Naive thymus-derived CD4-positive, alpha-beta T cell (primary cell): ENCODE measurements at regions of chr3 and their contacts with region 1.

Region 1: GRCh38 chr3:49469936-49470713 is at the start of gene DAG1:
- DNase-seq: peak; percentile 90 to 98 (median 95)
- ATAC-seq: peak; percentile 91
- H3K4me3 ChIP-seq: peak within 1 kb of the TSS; percentile 92
- H3K4me3 Mint-ChIP-seq: peak within 1 kb of the TSS; percentile 87 to 97 (median 92)
- H3K27ac ChIP-seq: peak within 1 kb of the TSS; percentile 94
- H3K27ac Mint-ChIP-seq: peak within 1 kb of the TSS; percentile 89 to 95 (median 93)
- H3K4me1 ChIP-seq: peaks cover 15 to 20% of the 10 kb centered on the region in 2 donors
- H3K4me1 Mint-ChIP-seq: peaks cover 14 to 27% (median 22%) of the 10 kb centered on the region in 7 donors
- H3K27me3 ChIP-seq: no peaks in the 10 kb centered on the region
- H3K27me3 Mint-ChIP-seq: no peaks in the 10 kb centered on the region
- total RNA-seq, gene DAG1: 12.0 to 22.3 (median 20.1) TPM

Region 2: GRCh38 chr3:48088749-48089466 is 1381.2 kb before region 1 on chr3:
- CTCF ChIA-PET with region 1: no interaction called
- POLR2A ChIA-PET with region 1: no interaction called
- intact Hi-C with region 1: loop called in 1 of 2 experiments (anchors 5 kb)
- DNase-seq: peak; percentile 89 to 96 (median 94)
- ATAC-seq: peak; percentile 97
- H3K4me3 ChIP-seq: peak overlapping the region; percentile 85
- H3K4me3 Mint-ChIP-seq: peak overlapping the region; percentile 90 to 99 (median 96)
- H3K27ac ChIP-seq: peak overlapping the region; percentile 95
- H3K27ac Mint-ChIP-seq: peak overlapping the region; percentile 71 to 99 (median 98)
- H3K4me1 ChIP-seq: peaks cover 7 to 11% of the 10 kb centered on the region in 2 donors
- H3K4me1 Mint-ChIP-seq: peaks cover 14 to 33% (median 29%) of the 10 kb centered on the region in 7 donors
- H3K27me3 ChIP-seq: no peaks in the 10 kb centered on the region
- H3K27me3 Mint-ChIP-seq: peaks cover 0 to 18% (median 0%) of the 10 kb centered on the region in 5 donors

Region 3: DNA sequence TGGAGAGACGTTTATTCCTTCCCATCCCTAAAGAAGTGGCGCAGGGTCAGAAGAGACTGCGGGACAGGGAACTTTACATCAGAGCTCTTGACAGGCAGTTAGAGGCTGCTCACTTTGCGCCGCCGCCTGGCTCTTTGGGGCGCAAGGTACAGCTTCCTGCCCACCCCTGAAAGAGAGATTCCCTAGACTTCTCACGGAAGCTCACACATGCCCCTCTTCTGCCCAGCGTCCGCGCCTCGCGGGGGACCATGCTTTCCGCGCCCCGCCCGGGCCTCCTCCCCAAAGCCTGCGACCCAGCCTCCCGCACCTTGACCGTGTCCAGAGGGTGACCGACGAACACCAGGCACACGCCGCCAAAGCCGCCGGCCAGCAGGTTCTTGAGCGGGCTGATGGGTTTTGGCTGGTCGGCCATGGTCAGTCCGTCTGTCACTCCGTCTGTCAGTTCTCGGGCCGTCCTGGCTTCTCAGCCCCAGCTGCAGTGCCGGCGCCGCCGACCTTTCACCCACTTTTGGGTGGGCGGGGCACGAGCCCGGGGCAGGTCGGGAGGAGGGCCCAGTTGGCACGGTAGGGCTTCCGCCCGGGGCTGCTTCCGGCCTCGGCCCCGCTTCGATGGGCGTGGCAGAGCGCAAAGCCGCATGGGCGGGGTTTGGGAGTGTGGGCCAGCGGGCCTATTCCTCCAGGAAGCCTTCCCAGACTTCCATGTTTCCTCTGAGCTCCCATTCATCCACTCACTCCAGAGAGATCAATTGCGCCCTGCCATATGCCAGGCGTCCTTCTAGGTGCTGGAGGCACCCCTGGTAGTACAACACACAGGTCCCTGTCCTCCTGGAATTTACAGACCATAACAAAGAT is 571.5 kb before region 1 on chr3 and contains the start of gene SLC25A20:
- CTCF ChIA-PET with region 1: no interaction called
- POLR2A ChIA-PET with region 1: no interaction called
- intact Hi-C with region 1: loop called in 1 of 2 experiments (anchors 10 kb)
- DNase-seq: peak; percentile 78 to 95 (median 85)
- ATAC-seq: peak; percentile 98
- H3K4me3 ChIP-seq: peak within 1 kb of the TSS; percentile 91
- H3K4me3 Mint-ChIP-seq: peak within 1 kb of the TSS; percentile 89 to 99 (median 94)
- H3K27ac ChIP-seq: peak within 1 kb of the TSS; percentile 76
- H3K27ac Mint-ChIP-seq: peak within 1 kb of the TSS; percentile 83 to 99 (median 93)
- H3K4me1 ChIP-seq: peaks cover 21 to 23% of the 10 kb centered on the region in 2 donors
- H3K4me1 Mint-ChIP-seq: peaks cover 27 to 51% (median 41%) of the 10 kb centered on the region in 7 donors
- H3K27me3 ChIP-seq: no peaks in the 10 kb centered on the region
- H3K27me3 Mint-ChIP-seq: no peaks in the 10 kb centered on the region
- total RNA-seq, gene SLC25A20: 6.6 to 27.3 (median 12.8) TPM

Region 4: DNA sequence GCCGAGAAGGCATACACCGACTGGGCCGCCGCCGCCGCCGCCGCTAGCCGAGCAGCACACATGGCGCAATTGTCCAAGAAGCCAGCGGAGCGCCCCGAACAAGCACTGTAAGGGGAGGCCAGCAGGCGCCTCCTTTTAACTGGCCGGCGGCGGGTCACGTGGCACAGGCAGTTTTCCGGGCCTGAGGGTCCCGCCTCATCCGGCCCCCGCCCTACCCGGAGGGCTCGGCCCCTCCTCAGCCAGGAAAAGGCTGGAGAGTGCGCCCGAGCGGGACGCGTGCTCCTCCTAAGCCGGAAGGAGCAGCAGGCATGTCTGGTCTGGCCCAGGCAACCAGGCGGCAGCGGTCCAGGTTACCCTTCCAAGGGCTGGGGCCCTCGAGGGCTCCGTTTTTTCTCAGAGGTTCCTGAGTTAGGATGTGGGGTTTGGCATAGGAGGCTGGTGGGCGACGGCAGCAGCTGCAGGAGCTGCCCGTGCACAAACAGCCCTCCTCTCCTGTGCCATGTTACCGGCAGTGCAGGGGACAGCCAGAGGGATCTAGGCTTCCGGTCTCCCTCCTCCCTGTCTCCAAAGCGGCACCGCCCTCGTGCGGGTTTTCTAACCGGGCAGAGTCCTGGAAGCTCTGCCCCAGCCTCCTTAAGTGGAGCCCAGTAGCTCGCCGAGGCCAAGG is 111.8 kb before region 1 on chr3 and contains the start of gene GPX1:
- CTCF ChIA-PET with region 1: no interaction called
- POLR2A ChIA-PET with region 1: no interaction called
- intact Hi-C with region 1: loop called in 1 of 2 experiments (anchors 1 kb)
- DNase-seq: peak; percentile 45 to 89 (median 57)
- ATAC-seq: peak; percentile 87
- H3K4me3 ChIP-seq: peak within 1 kb of the TSS; percentile 85
- H3K4me3 Mint-ChIP-seq: peak within 1 kb of the TSS; percentile 88 to 99 (median 92)
- H3K27ac ChIP-seq: peak within 1 kb of the TSS; percentile 81
- H3K27ac Mint-ChIP-seq: peak within 1 kb of the TSS; percentile 92 to 98 (median 95)
- H3K4me1 ChIP-seq: peaks cover 17% of the 10 kb centered on the region in 2 donors
- H3K4me1 Mint-ChIP-seq: peaks cover 14 to 43% (median 25%) of the 10 kb centered on the region in 7 donors
- H3K27me3 ChIP-seq: no peaks in the 10 kb centered on the region
- H3K27me3 Mint-ChIP-seq: no peaks in the 10 kb centered on the region
- total RNA-seq, gene GPX1: 56.9 to 201 (median 86.9) TPM

Region 5: DNA sequence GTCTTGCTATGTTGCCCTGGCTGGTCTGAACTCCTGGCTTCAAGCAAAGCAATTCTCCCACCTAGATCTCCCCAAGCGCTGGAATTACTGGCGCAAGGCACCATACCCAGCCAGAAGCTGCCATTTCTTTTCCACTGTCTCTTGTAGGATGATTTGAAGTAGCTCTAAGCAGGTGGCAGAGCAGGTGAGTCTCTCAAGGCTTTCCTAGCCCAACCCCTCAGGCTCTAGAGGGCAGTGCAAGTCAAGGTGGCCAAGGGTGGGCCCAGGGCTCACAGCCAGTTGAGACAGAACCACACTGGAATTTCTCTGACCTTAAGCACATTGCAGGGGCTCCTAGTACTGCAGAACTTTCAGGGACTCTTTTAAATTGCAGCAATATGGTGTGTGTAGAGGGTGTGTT is 15.7 kb before region 1 on chr3:
- CTCF ChIA-PET with region 1: interaction called, 3 read pairs
- POLR2A ChIA-PET with region 1: interaction called, 3 read pairs
- intact Hi-C with region 1: loop called in 1 of 2 experiments (anchors 1 kb)
- DNase-seq: no peak
- ATAC-seq: no peak
- H3K4me3 ChIP-seq: no peak overlapping the region
- H3K4me3 Mint-ChIP-seq: no peak overlapping the region
- H3K27ac ChIP-seq: no peak overlapping the region
- H3K27ac Mint-ChIP-seq: peak overlapping the region in 1 of 9 donors; percentile 63
- H3K4me1 ChIP-seq: no peaks in the 10 kb centered on the region
- H3K4me1 Mint-ChIP-seq: no peaks in the 10 kb centered on the region
- H3K27me3 ChIP-seq: no peaks in the 10 kb centered on the region
- H3K27me3 Mint-ChIP-seq: no peaks in the 10 kb centered on the region

Region 6: GRCh38 chr3:49512771-49513358 is 42.7 kb after region 1 on chr3:
- CTCF ChIA-PET with region 1: no interaction called
- POLR2A ChIA-PET with region 1: no interaction called
- intact Hi-C with region 1: no loop called
- DNase-seq: no peak
- ATAC-seq: no peak
- H3K4me3 ChIP-seq: no peak overlapping the region
- H3K4me3 Mint-ChIP-seq: no peak overlapping the region
- H3K27ac ChIP-seq: no peak overlapping the region
- H3K27ac Mint-ChIP-seq: peak overlapping the region in 1 of 9 donors; percentile 42
- H3K4me1 ChIP-seq: no peaks in the 10 kb centered on the region
- H3K4me1 Mint-ChIP-seq: peaks cover 0 to 19% (median 10%) of the 10 kb centered on the region in 7 donors
- H3K27me3 ChIP-seq: no peaks in the 10 kb centered on the region
- H3K27me3 Mint-ChIP-seq: no peaks in the 10 kb centered on the region

Region 7: GRCh38 chr3:49638445-49638844 is 168.3 kb after region 1 on chr3:
- CTCF ChIA-PET with region 1: no interaction called
- POLR2A ChIA-PET with region 1: no interaction called
- intact Hi-C with region 1: no loop called
- DNase-seq: no peak
- ATAC-seq: no peak
- H3K4me3 ChIP-seq: no peak overlapping the region
- H3K4me3 Mint-ChIP-seq: no peak overlapping the region
- H3K27ac ChIP-seq: no peak overlapping the region
- H3K27ac Mint-ChIP-seq: no peak overlapping the region
- H3K4me1 ChIP-seq: no peaks in the 10 kb centered on the region
- H3K4me1 Mint-ChIP-seq: peaks cover 0 to 7% (median 0%) of the 10 kb centered on the region in 7 donors
- H3K27me3 ChIP-seq: no peaks in the 10 kb centered on the region
- H3K27me3 Mint-ChIP-seq: peaks cover 0 to 3% (median 0%) of the 10 kb centered on the region in 5 donors

Region 8: DNA sequence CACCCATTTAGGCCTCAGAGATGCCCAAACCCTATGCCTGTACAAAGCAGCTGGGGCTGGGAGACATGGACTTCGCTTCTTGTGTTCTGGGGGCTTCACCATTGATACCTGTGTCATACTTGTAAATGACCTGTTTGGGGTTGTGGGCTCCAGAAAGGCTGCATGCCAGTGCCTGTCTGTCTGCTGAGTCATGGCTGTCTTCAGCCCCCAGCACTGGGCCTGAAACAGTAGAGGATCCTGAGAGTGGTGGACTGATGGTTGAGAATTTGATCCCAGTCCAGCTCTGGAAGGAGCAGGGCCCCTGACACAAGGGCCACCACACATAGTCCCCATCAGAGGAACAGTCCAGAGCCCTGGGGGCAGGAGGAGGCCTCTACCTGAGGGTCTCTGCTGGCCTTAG is 179.5 kb after region 1 on chr3:
- CTCF ChIA-PET with region 1: no interaction called
- POLR2A ChIA-PET with region 1: no interaction called
- intact Hi-C with region 1: no loop called
- DNase-seq: no peak
- ATAC-seq: no peak
- H3K4me3 ChIP-seq: no peak overlapping the region
- H3K4me3 Mint-ChIP-seq: no peak overlapping the region
- H3K27ac ChIP-seq: no peak overlapping the region
- H3K27ac Mint-ChIP-seq: no peak overlapping the region
- H3K4me1 ChIP-seq: no peaks in the 10 kb centered on the region
- H3K4me1 Mint-ChIP-seq: peaks cover 0 to 2% (median 0%) of the 10 kb centered on the region in 7 donors
- H3K27me3 ChIP-seq: no peaks in the 10 kb centered on the region
- H3K27me3 Mint-ChIP-seq: no peaks in the 10 kb centered on the region

Region 9: GRCh38 chr3:49712631-49713319 is 242.7 kb after region 1 on chr3:
- CTCF ChIA-PET with region 1: no interaction called
- POLR2A ChIA-PET with region 1: no interaction called
- intact Hi-C with region 1: no loop called
- DNase-seq: no peak
- ATAC-seq: no peak
- H3K4me3 ChIP-seq: no peak overlapping the region
- H3K4me3 Mint-ChIP-seq: no peak overlapping the region
- H3K27ac ChIP-seq: no peak overlapping the region
- H3K27ac Mint-ChIP-seq: peak overlapping the region in 1 of 9 donors; percentile 4
- H3K4me1 ChIP-seq: no peaks in the 10 kb centered on the region
- H3K4me1 Mint-ChIP-seq: peaks cover 0 to 17% (median 4%) of the 10 kb centered on the region in 7 donors
- H3K27me3 ChIP-seq: no peaks in the 10 kb centered on the region
- H3K27me3 Mint-ChIP-seq: no peaks in the 10 kb centered on the region

Region 10: DNA sequence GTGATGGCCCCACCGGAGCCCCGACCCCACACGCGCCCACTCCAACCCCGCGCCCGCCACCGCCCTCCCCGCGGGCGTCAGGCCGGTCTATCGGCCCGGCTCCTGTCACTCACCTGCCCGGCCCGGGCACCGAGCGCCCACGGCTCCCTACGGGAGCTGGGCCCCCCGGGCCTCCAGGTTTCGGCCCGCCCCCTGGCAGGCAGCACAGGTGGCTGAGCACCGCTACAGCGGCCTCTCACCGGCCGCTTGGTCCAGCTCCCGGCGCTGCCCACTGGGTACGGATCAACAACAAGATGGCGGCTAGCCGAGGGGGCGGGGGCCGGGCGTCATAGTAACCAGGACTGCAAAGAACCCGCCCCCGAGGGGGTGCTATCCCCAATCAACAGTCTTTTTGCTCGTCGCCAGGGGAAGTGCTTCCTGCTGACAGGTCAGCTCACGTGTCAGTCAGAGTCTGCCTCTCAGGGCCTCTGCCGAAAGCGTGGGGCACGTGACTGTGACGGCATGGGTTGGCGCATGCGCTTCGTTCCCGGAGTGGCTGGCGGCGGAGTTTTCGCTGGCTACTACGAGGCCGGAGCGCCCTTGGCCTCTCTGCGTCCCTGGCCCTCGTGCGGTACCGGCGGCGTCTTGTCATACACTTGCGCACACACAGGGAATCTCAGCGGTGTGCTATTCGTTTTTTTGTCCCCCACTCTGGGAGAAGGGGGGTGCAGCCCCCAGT is 316.3 kb after region 1 on chr3 and contains the start of gene IP6K1:
- CTCF ChIA-PET with region 1: no interaction called
- POLR2A ChIA-PET with region 1: no interaction called
- intact Hi-C with region 1: loop called in 1 of 2 experiments (anchors 1 kb)
- DNase-seq: peak; percentile 90 to 100 (median 99)
- ATAC-seq: peak; percentile 99
- H3K4me3 ChIP-seq: peak within 1 kb of the TSS; percentile 80
- H3K4me3 Mint-ChIP-seq: peak within 1 kb of the TSS; percentile 91 to 99 (median 94)
- H3K27ac ChIP-seq: peak within 1 kb of the TSS; percentile 95
- H3K27ac Mint-ChIP-seq: peak within 1 kb of the TSS; percentile 96 to 100 (median 99)
- H3K4me1 ChIP-seq: peaks cover 9 to 12% of the 10 kb centered on the region in 2 donors
- H3K4me1 Mint-ChIP-seq: peaks cover 15 to 50% (median 32%) of the 10 kb centered on the region in 7 donors
- H3K27me3 ChIP-seq: no peaks in the 10 kb centered on the region
- H3K27me3 Mint-ChIP-seq: peaks cover 0 to 6% (median 0%) of the 10 kb centered on the region in 5 donors
- total RNA-seq, gene IP6K1: 41.8 to 57.0 (median 47.3) TPM